Right ventricle myocardium inferior (tissue), 1 donor: ENCODE measurements at regions of chr1 and their contacts with region 1.

Region 1: DNA sequence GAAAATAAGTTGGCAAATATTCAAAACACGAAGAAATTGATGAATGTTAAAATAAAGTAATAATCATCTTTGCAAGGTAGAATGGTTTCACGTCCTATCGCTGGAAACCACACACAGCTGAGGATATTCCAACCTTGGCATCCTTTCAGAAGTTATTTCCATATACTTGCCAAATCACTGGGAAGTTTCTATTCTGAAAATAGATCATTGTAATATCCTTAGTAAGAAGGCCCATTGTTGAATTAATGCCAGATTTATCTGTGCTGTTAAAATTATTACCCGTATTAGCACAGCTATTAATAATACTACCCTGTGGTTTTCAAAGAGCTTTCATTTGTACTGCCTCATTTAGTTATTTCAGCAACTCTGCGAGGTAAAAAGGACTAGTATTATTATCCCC is 81.1 kb downstream of the OLFM3 start:
- DNase-seq: no peak
- ATAC-seq: peak; percentile 70

Region 2: GRCh38 chr1:101540161-101540560 is 375.4 kb before region 1 on chr1:
- intact Hi-C with region 1: no loop called
- DNase-seq: no peak
- ATAC-seq: no peak

Region 3: DNA sequence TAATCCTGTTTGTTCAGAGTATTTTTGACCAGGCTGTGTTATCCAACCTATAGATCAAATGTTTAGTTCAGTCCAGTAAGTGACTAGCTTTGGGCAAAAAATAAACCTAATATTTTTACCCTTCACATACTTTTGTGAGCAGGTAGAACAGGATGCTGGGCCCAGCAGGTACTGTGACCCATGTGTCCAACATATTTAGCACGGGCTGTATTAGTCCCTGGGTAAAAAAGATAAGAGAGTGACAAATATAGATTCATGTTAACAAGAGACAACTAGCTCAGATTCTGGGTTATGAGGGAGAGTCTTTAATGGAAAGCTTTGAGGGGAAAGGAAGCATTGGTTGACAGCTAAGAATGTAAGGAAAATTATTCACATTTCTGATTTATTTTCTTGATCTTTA is 38.0 kb after region 1 on chr1:
- intact Hi-C with region 1: loop called (anchors 5 kb)
- DNase-seq: no peak
- ATAC-seq: peak; percentile 44